Right ventricle myocardium superior (tissue), 1 donor: ENCODE measurements at regions of chr2 and their contacts with region 1.

Region 1: GRCh38 chr2:238370823-238371372 is 50.6 kb downstream of the TRAF3IP1 start:
- DNase-seq: peak; percentile 67
- ATAC-seq: peak; percentile 99

Region 2: GRCh38 chr2:238461491-238461890 is 90.6 kb after region 1 on chr2:
- intact Hi-C with region 1: loop called (anchors 2 kb)
- DNase-seq: no peak
- ATAC-seq: no peak

Region 3: GRCh38 chr2:238523158-238524110 is 152.5 kb after region 1 on chr2:
- intact Hi-C with region 1: no loop called
- DNase-seq: no peak
- ATAC-seq: peak; percentile 20

Region 4: DNA sequence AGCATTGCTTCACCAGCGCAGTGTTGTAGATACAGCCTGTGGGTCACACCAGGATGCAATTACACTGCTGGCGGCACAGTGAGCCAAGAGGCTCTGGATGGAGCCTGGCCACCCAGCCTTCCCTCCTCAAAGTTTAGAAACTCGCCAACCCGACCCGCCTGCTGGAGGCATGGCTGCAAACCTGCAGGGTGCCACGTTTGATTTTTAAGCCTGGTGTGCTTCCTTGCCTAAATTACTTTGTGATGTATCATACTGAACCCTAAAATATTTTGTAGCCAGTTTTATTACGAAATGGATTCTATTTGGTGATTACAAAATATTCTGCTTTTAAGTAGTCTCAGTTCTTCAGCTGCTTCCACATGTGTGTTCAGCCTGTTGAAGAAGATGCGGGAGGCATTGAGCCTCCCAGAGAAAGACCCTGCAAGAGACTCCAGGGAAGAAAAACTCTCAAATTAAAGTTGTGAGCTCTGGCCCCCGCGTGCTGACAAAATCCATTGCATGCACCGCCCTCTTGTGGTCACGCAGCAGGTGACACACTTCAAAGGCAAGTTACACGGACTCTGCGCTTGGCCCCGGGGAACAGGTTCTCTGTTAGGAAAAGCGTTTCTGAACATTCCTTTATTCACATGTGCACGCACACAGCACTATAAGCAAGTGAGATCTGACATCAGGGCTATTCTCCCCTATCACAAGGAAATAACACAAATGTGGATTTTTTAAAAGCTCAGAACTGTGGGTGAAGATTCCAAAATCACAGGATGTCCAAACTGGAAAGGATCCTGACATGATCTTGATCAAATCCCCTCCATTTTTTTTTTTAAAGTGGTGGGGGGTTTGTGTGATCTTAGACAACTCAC is 414.0 kb after region 1 on chr2:
- intact Hi-C with region 1: loop called (anchors 10 kb)
- DNase-seq: peak; percentile 80
- ATAC-seq: peak; percentile 94